A549 (cell line): ENCODE measurements at regions of chr2 and their contacts with region 1.

Region 1: GRCh38 chr2:37832590-37833197 is 92.4 kb upstream of the RMDN2 start:
- DNase-seq: peak; percentile 84 to 88
- ATAC-seq: peak; percentile 99
- H3K4me3 ChIP-seq: no peak overlapping the region
- H3K27ac ChIP-seq: peak overlapping the region; percentile 41 to 43; a peak in 2 of 6 replicates
- H3K4me1 ChIP-seq: peaks cover 20% of the 10 kb centered on the region
- CTCF ChIP-seq: peak; percentile 99
- EP300 ChIP-seq: no peak
- POLR2A ChIP-seq: no peak
- RAD21 ChIP-seq: peak; percentile 100

Region 2: DNA sequence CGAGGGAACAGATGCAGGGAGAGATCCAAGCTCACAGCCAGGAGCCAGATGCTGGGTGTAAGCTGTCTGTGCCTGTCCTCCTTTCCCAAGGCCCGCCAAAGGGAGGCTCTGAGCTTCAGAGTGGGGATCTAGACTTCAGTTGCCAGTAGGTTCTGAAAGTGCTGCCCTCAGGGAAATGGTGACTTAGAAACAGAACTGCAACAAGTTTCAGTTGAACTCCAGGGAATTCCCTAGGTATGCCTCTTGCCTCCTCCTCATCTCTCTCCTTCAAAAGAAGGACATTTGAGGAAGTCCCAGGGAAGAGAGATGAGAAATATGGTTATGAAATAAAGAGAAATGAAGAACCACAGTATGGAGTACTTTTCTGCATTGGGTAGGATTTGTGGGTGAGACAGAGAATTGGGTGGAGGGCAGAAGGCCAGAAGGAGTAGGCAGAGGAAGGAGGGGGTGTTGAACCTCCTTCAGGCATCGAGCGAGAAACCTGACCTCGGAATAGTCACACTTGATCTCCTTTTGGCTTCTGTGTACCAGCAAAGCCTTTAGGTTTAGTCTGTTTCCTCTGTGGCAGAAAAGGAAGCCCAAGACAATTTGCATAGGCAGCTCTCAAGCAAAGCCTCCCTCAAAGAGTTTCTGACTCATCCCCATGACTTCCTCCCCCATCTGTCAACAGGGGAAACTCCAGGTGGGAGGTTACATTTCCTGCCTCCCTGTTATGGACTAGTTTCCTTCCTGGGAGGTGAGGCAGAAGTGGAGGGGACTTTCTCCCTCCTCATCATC is 442.5 kb before region 1 on chr2:
- CTCF ChIA-PET with region 1: interaction called, 172 read pairs
- POLR2A ChIA-PET with region 1: no interaction called
- DNase-seq: peak; percentile 79 to 86
- ATAC-seq: peak; percentile 86 to 91
- H3K4me3 ChIP-seq: no peak overlapping the region
- H3K27ac ChIP-seq: peak overlapping the region; percentile 35 to 80
- H3K4me1 ChIP-seq: peaks cover 22% of the 10 kb centered on the region
- CTCF ChIP-seq: no peak
- EP300 ChIP-seq: no peak
- POLR2A ChIP-seq: no peak
- RAD21 ChIP-seq: no peak

Region 3: DNA sequence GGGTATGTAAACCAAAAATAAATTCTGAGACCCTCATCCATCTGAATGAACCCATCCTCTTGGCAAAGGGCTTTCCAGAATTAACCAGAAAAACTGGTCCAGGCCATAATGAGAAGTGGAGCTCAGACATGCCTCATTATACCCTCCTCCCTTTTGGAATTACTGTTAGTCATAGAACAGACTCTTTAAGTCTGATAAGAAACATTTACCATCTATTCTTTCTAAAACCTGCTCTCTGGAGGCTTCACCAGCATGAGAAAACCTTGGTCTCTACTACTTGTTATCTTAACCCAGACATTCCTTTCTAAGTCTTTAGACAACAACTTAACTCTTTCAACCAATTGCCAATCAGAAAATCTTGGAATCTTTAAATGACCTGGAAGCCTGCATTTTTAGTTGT is 405.5 kb before region 1 on chr2:
- CTCF ChIA-PET with region 1: interaction called, 15 read pairs
- POLR2A ChIA-PET with region 1: no interaction called
- DNase-seq: no peak
- ATAC-seq: no peak
- H3K4me3 ChIP-seq: no peak overlapping the region
- H3K27ac ChIP-seq: no peak overlapping the region
- H3K4me1 ChIP-seq: no peaks in the 10 kb centered on the region
- CTCF ChIP-seq: no peak
- EP300 ChIP-seq: no peak
- POLR2A ChIP-seq: no peak
- RAD21 ChIP-seq: no peak

Region 4: DNA sequence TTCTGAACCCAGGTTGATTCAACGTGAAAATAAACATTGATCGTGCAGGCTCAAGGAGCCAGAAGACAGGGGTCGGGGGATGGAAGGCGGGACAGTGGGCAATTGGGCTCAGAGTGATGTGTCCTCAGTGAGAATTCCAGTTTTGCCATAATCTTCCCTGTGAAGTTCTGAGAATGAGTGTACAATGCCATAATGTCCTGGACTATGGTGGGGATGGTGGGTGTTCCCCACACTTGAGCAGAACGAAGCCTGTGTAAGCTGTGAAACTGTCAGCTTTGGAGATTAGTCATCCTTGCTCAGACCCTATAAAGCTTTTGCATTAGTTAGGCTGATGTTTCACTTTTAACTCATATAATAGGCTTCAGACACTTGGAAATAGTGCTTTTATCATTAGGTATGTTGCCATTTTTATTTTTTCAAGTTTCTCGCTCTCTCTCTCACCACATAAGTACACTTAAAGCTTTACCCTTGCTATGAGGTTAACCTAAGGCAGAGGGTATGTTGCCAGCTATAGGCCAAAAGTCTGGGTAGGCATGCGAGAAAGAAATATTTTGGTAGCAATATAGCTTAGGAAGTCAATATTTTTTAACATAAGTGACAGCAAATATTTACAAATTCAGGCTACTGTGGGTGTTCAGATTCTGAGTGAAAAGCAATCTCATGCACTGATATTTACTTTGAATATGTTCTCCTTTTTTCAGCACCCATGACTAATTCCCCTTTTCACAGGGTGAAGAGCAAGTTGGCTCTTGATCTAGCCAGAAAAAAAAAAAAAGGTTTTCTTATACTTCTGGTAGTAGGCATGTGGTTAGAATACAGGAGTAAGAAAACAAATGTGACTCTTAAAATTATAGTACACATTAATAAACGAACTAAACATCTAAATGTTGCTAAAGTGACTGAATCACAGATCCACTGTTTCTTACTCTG is 208.5 kb before region 1 on chr2:
- CTCF ChIA-PET with region 1: interaction called, 10 read pairs
- POLR2A ChIA-PET with region 1: no interaction called
- DNase-seq: no peak
- ATAC-seq: no peak
- H3K4me3 ChIP-seq: no peak overlapping the region
- H3K27ac ChIP-seq: no peak overlapping the region
- H3K4me1 ChIP-seq: peaks cover 7% of the 10 kb centered on the region; the same call in 1 of the 3 replicates
- CTCF ChIP-seq: no peak
- EP300 ChIP-seq: no peak
- POLR2A ChIP-seq: no peak
- RAD21 ChIP-seq: no peak

Region 5: GRCh38 chr2:37665604-37666362 is 166.9 kb before region 1 on chr2:
- CTCF ChIA-PET with region 1: interaction called, 34 read pairs
- POLR2A ChIA-PET with region 1: interaction called, 3 read pairs
- DNase-seq: no peak
- ATAC-seq: no peak
- H3K4me3 ChIP-seq: no peak overlapping the region
- H3K27ac ChIP-seq: no peak overlapping the region
- H3K4me1 ChIP-seq: peaks cover 46% of the 10 kb centered on the region
- CTCF ChIP-seq: no peak
- EP300 ChIP-seq: no peak
- POLR2A ChIP-seq: no peak
- RAD21 ChIP-seq: no peak

Region 6: DNA sequence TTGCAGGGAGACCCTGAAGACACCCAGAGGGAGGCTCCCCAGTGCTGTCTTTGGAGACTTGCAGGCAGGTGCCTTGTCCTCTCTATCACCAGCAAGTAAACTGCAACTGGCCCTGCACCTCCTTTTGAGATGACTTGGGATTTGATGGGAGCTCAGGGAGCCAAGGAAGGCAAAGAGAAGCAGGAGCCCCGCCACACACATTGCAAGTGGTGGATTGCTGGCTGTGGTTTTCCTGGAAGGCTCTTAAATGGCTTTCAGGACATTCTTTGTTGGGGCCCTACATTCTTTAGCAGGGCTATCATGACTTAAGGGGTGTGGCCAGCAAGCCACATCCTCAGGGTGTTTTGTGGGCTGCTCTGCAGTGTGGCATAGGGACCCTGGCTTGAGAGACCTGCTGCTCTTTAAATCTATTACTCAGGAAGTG is 121.4 kb before region 1 on chr2:
- CTCF ChIA-PET with region 1: no interaction called
- POLR2A ChIA-PET with region 1: no interaction called
- DNase-seq: peak; percentile 36 to 45
- ATAC-seq: peak; percentile 62 to 82; a peak in 5 of 6 replicates
- H3K4me3 ChIP-seq: no peak overlapping the region
- H3K27ac ChIP-seq: peak overlapping the region; percentile 11 to 76; a peak in 3 of 6 replicates
- H3K4me1 ChIP-seq: peaks cover 10% of the 10 kb centered on the region
- CTCF ChIP-seq: no peak
- EP300 ChIP-seq: no peak
- POLR2A ChIP-seq: no peak
- RAD21 ChIP-seq: no peak

Region 7: DNA sequence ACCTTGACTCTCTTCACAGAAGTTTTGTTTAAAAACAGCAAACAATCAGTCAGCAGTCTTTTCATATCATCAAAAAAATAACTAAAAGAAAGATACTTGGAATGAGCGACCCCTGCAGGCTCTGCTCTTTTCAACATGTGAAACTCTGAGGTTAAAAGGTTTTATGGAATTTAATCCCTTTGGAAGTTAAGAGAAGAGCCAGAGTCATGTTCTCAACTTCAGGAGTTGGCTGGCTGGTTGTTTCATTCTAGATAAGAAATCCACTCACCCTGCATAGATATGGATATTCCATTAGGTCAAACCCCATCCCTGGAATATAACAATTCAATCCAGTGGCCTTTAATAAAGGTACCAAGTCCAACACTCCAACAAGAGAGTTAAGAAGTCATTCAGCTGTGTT is 23.2 kb before region 1 on chr2:
- CTCF ChIA-PET with region 1: interaction called, 13 read pairs
- POLR2A ChIA-PET with region 1: no interaction called
- DNase-seq: peak in 1 of 2 experiments; percentile 37
- ATAC-seq: no peak
- H3K4me3 ChIP-seq: no peak overlapping the region
- H3K27ac ChIP-seq: peak overlapping the region; percentile 0 to 7; a peak in 2 of 6 replicates
- H3K4me1 ChIP-seq: no peaks in the 10 kb centered on the region
- CTCF ChIP-seq: peak; percentile 57
- EP300 ChIP-seq: no peak
- POLR2A ChIP-seq: no peak
- RAD21 ChIP-seq: peak; percentile 57 to 70

Region 8: DNA sequence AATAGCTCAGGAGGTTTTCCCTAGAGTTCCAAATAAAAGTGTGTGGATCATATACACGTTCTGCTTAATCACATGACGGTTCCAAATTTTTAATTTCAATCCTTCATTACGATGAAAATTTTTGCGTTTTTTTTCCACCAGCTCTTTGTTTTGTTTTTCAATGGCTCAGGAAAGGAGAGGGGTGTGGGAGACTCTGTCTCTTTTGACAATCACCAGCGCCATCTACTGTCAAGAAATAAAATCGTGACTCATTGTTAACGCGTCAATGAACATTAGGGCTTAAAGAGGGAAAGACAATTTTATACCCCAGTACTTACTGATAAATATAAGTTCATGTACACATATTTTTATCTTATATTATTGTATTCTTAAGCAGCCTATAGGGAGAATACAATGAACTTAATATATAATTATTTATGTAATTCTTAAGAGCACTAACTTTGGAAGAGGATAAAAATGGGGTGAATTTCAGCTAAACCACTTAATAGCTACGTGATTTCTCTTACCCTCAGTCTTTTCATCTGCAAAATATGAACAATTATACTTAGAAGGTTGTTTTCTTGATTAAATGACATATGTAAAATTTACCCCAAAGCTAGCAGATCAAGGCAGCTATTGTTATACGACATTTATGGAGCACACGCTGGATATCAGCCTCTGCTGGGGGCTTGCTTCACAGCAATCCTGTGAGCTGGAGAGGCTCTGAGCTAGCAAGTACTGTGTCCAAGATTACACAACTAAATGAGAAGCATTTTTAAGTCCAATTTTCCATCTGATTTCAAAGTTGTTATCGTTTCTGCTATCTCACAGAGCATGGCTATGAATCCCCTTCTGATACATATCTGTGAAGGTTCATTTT is 45.0 kb after region 1 on chr2:
- CTCF ChIA-PET with region 1: interaction called, 53 read pairs
- POLR2A ChIA-PET with region 1: interaction called, 3 read pairs
- DNase-seq: peak; percentile 59
- ATAC-seq: peak; percentile 69 to 90
- H3K4me3 ChIP-seq: no peak overlapping the region
- H3K27ac ChIP-seq: no peak overlapping the region; a peak in 1 of 6 replicates
- H3K4me1 ChIP-seq: no peaks in the 10 kb centered on the region
- CTCF ChIP-seq: peak; percentile 98
- EP300 ChIP-seq: no peak
- POLR2A ChIP-seq: no peak
- RAD21 ChIP-seq: peak; percentile 93 to 95

Region 9: DNA sequence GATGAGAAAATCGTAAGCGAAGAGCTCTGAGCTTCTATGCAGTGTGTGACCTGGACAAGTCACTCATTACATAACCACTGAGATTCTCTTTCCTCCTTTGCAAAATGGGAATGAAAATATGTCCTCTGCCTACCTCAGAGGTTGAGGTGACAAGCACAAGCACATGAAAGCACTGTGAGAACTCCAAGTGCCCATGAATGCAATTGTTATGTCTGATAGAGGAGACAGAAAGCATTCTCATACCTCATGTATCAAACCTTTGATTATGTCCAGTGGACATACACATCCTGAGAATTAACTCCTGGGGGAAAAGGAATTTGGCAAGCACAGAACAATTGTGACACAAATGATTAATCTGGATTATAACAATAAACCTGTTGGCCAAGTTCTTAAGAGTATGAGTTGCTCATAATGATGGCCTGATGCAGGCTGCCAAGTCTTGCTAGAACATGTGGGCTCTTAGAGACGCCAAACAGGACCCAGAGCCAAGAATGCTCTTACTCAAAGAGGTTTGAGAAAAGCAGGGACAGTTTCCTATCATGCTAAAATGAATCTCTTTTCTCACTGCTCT is 83.9 kb after region 1 on chr2:
- CTCF ChIA-PET with region 1: no interaction called
- POLR2A ChIA-PET with region 1: no interaction called
- DNase-seq: peak in 1 of 2 experiments; percentile 11
- ATAC-seq: peak in 1 of 2 experiments; percentile 33; a peak in 2 of 6 replicates
- H3K4me3 ChIP-seq: no peak overlapping the region
- H3K27ac ChIP-seq: no peak overlapping the region
- H3K4me1 ChIP-seq: peaks cover 5% of the 10 kb centered on the region; the same call in 1 of the 3 replicates
- CTCF ChIP-seq: no peak
- EP300 ChIP-seq: no peak
- POLR2A ChIP-seq: no peak
- RAD21 ChIP-seq: no peak